WTC11 (cell line): ENCODE measurements at regions of chr3 and their contacts with region 1.

Region 1: DNA sequence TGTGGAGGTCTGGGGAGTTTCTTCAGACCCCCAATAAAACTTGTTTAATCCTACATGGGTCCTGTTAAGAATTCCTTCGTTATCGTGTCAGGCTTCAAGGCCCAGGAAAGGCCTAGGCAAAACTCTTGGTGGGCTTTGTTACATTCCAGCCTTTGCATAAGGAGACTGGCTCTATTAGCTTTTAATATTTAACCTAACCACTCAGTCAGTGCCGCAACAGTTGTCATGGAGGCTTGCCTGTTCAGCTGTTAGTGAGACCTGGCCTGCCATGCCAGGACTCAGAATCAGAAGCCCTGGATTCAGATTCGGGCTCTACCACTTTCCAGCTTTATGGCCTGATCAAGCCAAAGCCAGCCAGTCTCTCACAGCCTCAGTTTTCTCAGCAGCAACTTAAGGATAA is 19.6 kb downstream of the EIF1B start:
- DNase-seq: no peak
- ATAC-seq: no peak
- H3K4me3 Mint-ChIP-seq: no peak overlapping the region
- H3K27ac Mint-ChIP-seq: 0 out of 2 replicates have a peak overlapping the region, but pooled peaks have one; percentile 35
- H3K4me1 Mint-ChIP-seq: peaks cover 50% of the 10 kb centered on the region
- H3K27me3 Mint-ChIP-seq: no peaks in the 10 kb centered on the region
- CTCF ChIP-seq: no peak

Region 2: DNA sequence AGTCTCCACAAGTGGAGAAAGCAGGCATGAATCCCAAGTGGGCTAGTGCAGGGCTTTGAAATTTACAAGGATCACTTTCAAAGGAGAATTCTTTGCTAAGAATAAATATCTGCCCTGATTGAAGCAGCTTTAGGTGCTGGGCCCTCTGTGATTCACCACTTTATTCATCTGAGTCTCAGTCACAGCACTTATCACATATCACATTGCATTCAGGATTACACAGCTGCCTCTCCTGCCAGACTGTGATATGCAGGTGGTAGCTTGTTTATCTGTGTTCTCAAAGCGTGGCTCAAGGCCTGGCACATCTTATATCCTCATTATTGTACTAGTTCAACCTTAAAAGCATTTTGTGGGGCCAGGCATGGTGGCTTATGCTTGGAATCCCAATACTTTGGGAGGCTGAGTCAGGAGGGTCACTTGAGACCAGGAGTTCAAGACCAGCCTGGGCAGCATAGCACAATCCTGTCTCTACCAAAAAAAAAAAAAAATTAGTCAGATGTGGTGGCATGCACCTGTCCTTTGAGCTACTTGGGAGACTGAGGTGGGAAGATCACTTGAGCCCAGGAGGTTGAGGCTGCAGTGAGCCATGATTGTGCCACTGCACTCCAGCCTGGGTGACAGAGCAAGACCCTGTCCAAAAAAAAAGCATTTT is 176.5 kb before region 1 on chr3:
- CTCF ChIA-PET with region 1: no interaction called
- POLR2A ChIA-PET with region 1: no interaction called
- DNase-seq: no peak
- ATAC-seq: no peak
- H3K4me3 Mint-ChIP-seq: no peak overlapping the region
- H3K27ac Mint-ChIP-seq: no peak overlapping the region
- H3K4me1 Mint-ChIP-seq: no peaks in the 10 kb centered on the region
- H3K27me3 Mint-ChIP-seq: no peaks in the 10 kb centered on the region
- CTCF ChIP-seq: no peak

Region 3: DNA sequence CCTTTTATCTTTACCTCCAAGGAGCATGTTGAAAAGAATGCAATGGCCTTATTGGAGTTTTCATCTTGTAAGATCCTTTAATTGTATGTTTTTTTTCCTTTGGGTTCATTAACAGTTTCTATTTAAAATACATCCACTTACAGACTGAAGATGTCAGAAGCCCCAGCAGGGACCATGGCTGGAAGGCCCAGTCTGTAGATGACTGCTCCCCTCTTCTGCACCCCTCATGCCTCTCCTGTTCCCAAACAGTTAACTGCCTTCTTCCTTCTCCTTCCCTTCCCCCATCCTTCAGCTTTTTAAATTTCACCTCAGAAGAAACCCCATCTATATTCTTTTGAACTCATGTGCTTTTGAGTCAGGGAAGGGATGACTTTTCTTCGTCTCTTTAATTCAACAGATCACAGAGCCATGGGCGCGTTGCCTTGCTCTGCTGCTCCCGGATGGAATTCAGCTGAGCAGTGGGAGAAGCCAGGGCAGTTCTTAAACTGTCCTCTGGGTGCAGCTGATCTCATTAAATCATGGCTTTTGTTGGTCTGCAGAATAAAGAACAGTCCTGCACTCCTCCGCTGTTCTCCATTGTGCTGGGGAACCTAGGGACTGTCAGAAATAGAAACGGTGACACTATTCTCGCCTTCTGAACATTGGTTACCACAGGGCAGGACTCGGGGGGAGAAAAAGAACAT is 91.0 kb before region 1 on chr3:
- CTCF ChIA-PET with region 1: interaction called, 12 read pairs
- POLR2A ChIA-PET with region 1: no interaction called
- DNase-seq: peak; percentile 20
- ATAC-seq: peak; percentile 96
- H3K4me3 Mint-ChIP-seq: no peak overlapping the region
- H3K27ac Mint-ChIP-seq: no peak overlapping the region
- H3K4me1 Mint-ChIP-seq: peaks cover 8% of the 10 kb centered on the region
- H3K27me3 Mint-ChIP-seq: no peaks in the 10 kb centered on the region
- CTCF ChIP-seq: no peak

Region 4: DNA sequence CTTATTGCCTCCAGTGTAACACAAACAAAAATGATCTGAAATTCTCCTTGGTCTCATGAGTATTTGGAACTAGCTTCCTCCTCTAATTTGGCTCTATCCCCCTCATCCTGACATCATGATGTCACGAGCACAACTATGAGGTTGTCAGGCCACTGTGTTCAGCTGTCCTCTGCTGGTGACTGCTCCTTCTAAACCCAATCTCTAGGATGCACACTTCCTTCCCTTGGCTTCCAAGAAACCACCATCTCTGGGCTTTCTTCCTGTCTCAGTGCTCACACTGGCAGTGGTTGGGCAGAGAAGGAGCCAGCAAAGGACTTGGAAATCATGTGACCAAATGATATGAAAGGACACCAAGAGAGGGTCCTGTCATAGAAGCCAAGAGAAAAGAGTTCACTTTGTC is 50.3 kb before region 1 on chr3:
- CTCF ChIA-PET with region 1: no interaction called
- POLR2A ChIA-PET with region 1: no interaction called
- DNase-seq: no peak
- ATAC-seq: no peak
- H3K4me3 Mint-ChIP-seq: no peak overlapping the region
- H3K27ac Mint-ChIP-seq: no peak overlapping the region
- H3K4me1 Mint-ChIP-seq: no peaks in the 10 kb centered on the region
- H3K27me3 Mint-ChIP-seq: no peaks in the 10 kb centered on the region
- CTCF ChIP-seq: no peak

Region 5: GRCh38 chr3:40299721-40300335 is 29.2 kb before region 1 on chr3:
- CTCF ChIA-PET with region 1: no interaction called
- POLR2A ChIA-PET with region 1: no interaction called
- DNase-seq: no peak
- ATAC-seq: no peak
- H3K4me3 Mint-ChIP-seq: no peak overlapping the region
- H3K27ac Mint-ChIP-seq: peak overlapping the region; percentile 25
- H3K4me1 Mint-ChIP-seq: no peaks in the 10 kb centered on the region
- H3K27me3 Mint-ChIP-seq: no peaks in the 10 kb centered on the region
- CTCF ChIP-seq: no peak

Region 6: DNA sequence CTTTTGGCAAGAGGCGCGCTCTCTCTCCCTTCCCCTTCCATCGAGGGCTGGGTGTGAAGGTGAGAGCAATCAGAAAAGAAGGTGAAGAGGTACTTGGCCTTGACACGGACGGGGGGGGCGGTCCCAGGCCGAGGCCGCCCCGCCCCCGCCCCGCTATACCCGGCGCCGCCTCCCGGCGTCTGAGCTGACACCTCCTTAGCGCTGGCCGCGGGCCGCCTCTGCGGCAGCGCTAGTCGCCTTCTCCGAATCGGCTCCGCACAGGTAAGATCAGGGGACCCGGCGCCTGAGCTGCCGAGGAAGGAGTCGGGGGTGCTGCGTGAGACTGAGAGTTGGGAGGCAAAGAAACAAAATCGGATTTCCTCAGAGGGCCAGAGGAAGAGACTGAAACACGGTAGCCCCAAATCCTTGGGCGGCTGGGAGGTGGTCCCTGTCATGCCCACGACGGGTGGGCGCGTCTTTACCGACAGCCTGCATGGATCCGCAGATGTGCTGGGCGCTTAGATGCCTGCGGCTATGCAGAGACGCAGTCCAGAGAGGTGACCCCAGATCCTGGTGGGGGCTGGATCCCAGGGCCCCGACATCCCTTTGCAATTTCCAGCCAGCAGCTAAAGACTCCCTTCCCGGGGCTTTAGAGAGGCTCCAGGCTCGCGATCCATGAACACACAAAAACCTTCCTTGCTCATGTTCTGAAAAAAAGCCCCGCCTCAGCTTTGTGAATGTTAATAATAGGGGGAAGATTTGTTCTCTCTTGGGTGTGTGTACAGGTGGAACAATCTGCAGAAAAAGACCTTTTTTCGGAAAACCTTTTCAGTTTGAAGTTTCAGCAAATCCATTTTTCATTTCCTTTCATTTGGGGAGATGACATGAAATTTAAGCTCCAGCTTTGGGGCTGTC is 58.2 kb after region 1 on chr3 and contains the start of gene ENTPD3:
- CTCF ChIA-PET with region 1: interaction called, 11 read pairs
- POLR2A ChIA-PET with region 1: interaction called, 5 read pairs
- DNase-seq: peak; percentile 69
- ATAC-seq: peak; percentile 97
- H3K4me3 Mint-ChIP-seq: peak within 1 kb of the TSS; percentile 87
- H3K27ac Mint-ChIP-seq: no peak within 1 kb of the TSS
- H3K4me1 Mint-ChIP-seq: peaks cover 16% of the 10 kb centered on the region
- H3K27me3 Mint-ChIP-seq: peaks cover 44% of the 10 kb centered on the region
- CTCF ChIP-seq: no peak
- total RNA-seq, gene ENTPD3: 0.39 to 0.50 TPM (median 0.44 TPM) in 3 replicates

Region 7: GRCh38 chr3:40432793-40433192 is 103.7 kb after region 1 on chr3:
- CTCF ChIA-PET with region 1: interaction called, 33 read pairs
- POLR2A ChIA-PET with region 1: no interaction called
- DNase-seq: no peak
- ATAC-seq: no peak
- H3K4me3 Mint-ChIP-seq: no peak overlapping the region
- H3K27ac Mint-ChIP-seq: no peak overlapping the region
- H3K4me1 Mint-ChIP-seq: peaks cover 7% of the 10 kb centered on the region
- H3K27me3 Mint-ChIP-seq: no peaks in the 10 kb centered on the region
- CTCF ChIP-seq: no peak

Region 8: DNA sequence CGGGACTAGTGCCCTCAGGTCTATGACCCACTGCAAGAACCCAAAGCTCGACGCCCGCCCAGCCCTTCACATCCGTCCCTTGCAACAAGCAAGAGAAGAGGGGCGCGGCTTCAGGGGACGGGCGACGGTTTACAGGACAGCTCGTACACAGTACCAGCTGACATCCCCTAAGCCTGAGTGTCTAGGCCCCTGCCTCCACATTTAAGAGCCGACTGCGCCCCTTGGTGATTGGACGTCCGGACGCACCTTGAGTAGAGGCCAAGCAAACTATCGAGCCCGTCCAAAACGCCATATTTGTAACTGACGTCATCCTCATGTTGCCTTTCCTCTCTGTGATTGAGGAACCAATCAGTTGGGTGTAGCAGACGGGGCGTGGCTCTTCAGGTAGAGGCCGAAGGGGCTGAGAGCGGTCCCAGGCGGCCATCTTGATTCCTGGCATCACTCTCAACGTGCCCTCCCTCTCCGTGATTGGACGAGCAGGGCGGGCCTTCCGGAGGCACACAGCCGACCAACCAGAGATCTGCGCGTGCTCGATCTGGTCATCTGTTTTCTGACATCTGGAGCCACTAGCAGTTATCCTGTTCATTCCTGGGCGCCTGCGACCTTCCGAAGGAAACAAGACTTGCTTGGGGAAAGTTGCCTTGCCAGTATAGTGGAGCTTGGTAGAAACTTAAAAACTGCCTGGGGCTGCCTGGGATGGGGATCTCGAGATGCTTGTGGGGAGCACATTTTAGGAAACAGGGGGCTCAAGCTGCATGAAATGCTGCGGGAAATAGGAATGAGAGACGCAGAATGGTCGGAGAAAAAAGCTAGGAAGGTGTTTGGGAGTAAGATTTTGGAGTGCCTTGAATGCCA is 124.0 kb after region 1 on chr3:
- CTCF ChIA-PET with region 1: interaction called, 15 read pairs
- POLR2A ChIA-PET with region 1: interaction called, 6 read pairs
- DNase-seq: peak; percentile 97
- ATAC-seq: peak; percentile 96
- H3K4me3 Mint-ChIP-seq: peak overlapping the region; percentile 94
- H3K27ac Mint-ChIP-seq: peak overlapping the region; percentile 100
- H3K4me1 Mint-ChIP-seq: peaks cover 15% of the 10 kb centered on the region
- H3K27me3 Mint-ChIP-seq: no peaks in the 10 kb centered on the region
- CTCF ChIP-seq: no peak

Region 9: DNA sequence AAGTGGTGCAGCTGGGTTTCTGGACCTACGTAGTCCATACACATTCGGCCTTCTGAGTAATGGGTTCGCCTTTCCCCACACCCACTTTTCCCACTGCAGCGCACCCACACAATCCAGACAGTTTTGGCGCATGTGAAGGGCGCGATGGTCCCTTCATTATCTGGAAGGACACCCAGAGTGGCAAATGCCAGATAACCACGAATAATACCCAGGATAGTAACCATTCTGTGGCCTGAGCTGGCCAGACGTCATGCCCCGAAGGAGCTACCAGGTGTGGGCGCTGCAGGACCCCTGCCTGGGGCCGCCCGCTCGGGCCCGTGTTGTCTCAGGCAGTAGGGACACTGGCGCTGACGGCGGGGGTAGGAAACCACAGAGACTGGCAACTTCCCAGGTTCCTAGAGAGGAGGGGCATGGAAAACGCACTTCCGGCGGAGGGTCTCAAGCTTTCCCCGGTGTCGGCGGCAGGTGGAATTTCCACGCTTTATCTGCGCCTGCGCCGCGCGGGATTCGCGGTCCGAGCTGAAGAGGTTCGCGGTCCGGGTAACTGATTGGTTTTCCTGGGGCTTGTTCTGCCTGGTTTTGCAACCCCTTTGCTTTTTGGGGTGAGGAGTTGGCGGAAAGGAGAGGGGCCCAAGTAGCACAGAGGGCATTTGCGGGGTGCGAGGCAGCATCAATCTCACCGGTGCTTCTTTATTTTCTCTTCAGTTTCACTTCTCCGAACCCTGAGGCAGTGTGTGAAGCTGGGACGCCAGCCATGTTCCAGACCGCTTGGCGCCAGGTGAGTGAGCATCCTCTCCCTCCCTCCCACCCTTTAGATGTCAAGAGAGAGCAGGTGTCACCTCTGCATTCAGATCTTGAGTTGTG is 176.8 kb after region 1 on chr3 and contains the start of gene ZNF620:
- CTCF ChIA-PET with region 1: interaction called, 19 read pairs
- POLR2A ChIA-PET with region 1: no interaction called
- DNase-seq: peak; percentile 88
- ATAC-seq: peak; percentile 99
- H3K4me3 Mint-ChIP-seq: peak within 1 kb of the TSS; percentile 93
- H3K27ac Mint-ChIP-seq: peak within 1 kb of the TSS; percentile 96
- H3K4me1 Mint-ChIP-seq: peaks cover 17% of the 10 kb centered on the region
- H3K27me3 Mint-ChIP-seq: peaks cover 2% of the 10 kb centered on the region; the same call in 1 of the 2 replicates
- CTCF ChIP-seq: no peak
- total RNA-seq, gene ZNF620: 15.6 to 19.8 TPM (median 17.2 TPM) in 3 replicates